PC-3 (cell line): ENCODE measurements at regions of chrX and their contacts with region 1.

Region 1: GRCh38 chrX:154411322-154411980 is at the start of gene TAFAZZIN:
- DNase-seq: peak; percentile 68
- ATAC-seq: peak; percentile 23
- H3K4me3 ChIP-seq: peak within 1 kb of the TSS; percentile 89
- H3K27ac ChIP-seq: peak within 1 kb of the TSS; percentile 45
- H3K4me1 ChIP-seq: peaks cover 26% of the 10 kb centered on the region
- H3K27me3 ChIP-seq: no peaks in the 10 kb centered on the region
- CTCF ChIP-seq: no peak
- total RNA-seq, gene TAFAZZIN: 39.4 and 41.5 TPM in 2 replicates

Region 2: DNA sequence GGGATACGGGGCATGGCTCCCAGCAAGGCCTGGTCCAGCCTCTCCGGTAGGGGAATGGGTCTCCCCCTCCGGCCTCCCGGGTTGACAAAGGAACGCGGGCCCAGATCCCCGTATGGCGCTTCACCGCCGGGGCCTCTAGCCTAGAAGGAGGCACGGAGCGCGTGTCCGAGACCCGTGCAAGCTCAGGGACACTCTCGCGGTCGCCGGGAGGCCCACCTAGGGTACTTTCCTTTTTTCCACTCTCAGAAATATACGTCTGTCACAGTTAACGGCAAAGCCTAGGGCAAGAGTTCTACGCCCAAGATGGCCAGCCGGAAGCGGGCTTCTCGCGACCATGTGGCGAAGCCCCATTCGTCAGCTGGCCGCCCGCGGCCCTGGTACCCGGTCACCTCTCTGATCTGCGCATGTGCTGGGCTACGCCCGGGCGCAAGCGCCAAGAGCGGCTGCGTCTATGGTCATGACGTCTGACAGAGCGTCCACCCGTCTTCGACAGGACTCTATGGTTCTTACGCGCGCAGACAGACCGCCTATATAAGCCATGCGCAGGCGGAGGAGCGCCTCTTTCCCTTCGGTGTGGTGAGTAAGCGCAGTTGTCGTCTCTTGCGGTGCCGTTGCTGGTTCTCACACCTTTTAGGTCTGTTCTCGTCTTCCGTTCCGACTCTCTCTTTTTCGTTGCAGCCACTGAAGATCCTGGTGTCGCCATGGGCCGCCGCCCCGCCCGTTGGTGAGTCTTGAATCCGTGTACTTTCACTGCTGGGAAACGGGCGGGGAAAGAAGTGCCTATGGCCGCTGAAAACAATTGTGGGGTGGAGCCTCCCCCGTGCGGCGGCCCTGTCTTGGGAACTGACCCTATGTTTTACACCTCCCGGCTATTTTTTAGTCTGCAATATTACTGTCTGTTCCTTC is 13.4 kb before region 1 on chrX and contains the start of gene RPL10:
- CTCF ChIA-PET with region 1: no interaction called
- POLR2A ChIA-PET with region 1: no interaction called
- intact Hi-C with region 1: no loop called
- DNase-seq: peak; percentile 98
- ATAC-seq: peak; percentile 56
- H3K4me3 ChIP-seq: peak within 1 kb of the TSS; percentile 90
- H3K27ac ChIP-seq: peak within 1 kb of the TSS; percentile 98
- H3K4me1 ChIP-seq: peaks cover 12% of the 10 kb centered on the region; the same call in 1 of the 2 replicates
- H3K27me3 ChIP-seq: no peaks in the 10 kb centered on the region
- CTCF ChIP-seq: no peak
- total RNA-seq, gene RPL10: 2,879 and 3,401 TPM in 2 replicates

Region 3: GRCh38 chrX:154428176-154429010 is 16.9 kb after region 1 on chrX and contains the start of gene ATP6AP1:
- CTCF ChIA-PET with region 1: no interaction called
- POLR2A ChIA-PET with region 1: interaction called, 18 read pairs
- intact Hi-C with region 1: no loop called
- DNase-seq: peak; percentile 94
- ATAC-seq: peak; percentile 98
- H3K4me3 ChIP-seq: peak within 1 kb of the TSS; percentile 93
- H3K27ac ChIP-seq: no peak within 1 kb of the TSS
- H3K4me1 ChIP-seq: peaks cover 23% of the 10 kb centered on the region
- H3K27me3 ChIP-seq: no peaks in the 10 kb centered on the region
- CTCF ChIP-seq: no peak
- total RNA-seq, gene ATP6AP1: 68.7 and 94.0 TPM in 2 replicates

Region 4: DNA sequence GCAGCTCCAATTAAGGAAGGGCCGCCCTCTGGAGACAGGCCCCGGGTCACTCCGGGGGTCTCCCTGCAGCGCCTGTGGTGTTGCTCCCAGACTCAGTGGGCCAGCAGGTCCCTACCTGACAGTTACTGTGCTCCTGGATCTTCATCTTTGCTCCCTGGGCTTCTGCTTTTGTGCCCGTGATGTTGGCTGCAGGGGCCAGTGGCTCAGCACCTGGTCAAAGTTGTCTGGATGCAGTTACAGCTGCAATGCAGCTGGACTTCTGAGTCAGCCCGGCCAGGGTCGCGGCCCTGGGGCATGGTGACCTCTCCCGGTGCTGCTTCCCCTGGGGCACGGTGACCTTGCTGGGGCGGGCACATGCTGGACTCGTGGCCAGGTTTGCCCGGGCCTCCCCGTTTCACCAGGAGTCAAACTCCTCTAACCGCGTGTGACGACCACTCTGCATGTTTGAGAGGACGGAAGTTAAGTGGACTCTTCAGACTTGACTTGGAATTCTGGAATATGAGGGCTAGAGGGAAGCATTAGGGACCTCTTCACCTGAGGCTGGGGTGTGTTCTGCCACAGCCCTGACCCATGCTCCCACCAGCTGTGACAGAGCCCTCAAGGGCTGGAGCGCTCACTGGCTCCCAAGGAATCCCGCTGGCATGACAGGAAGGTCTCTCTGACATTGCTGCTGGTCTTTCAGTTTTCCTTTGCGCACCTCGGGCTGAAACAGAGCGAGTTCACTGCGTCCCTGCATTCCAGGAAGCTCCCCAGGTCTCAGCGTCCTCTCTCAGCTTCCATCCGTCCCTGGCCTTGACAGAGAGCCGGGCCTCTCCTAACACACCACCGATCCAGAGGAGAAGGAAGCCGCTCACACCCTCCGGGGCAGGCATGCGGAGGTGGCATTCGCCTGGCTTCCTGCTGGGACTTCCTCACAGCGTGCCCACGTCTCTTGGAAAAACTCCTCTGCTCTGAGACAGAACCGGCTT is 238.3 kb after region 1 on chrX:
- CTCF ChIA-PET with region 1: no interaction called
- POLR2A ChIA-PET with region 1: no interaction called
- intact Hi-C with region 1: no loop called
- DNase-seq: no peak
- ATAC-seq: no peak
- H3K4me3 ChIP-seq: no peak overlapping the region
- H3K27ac ChIP-seq: no peak overlapping the region
- H3K4me1 ChIP-seq: no peaks in the 10 kb centered on the region
- H3K27me3 ChIP-seq: no peaks in the 10 kb centered on the region
- CTCF ChIP-seq: no peak